CD8-positive, alpha-beta T cell (primary cell): ENCODE measurements at regions of chr1 and their contacts with region 1.

Region 1: DNA sequence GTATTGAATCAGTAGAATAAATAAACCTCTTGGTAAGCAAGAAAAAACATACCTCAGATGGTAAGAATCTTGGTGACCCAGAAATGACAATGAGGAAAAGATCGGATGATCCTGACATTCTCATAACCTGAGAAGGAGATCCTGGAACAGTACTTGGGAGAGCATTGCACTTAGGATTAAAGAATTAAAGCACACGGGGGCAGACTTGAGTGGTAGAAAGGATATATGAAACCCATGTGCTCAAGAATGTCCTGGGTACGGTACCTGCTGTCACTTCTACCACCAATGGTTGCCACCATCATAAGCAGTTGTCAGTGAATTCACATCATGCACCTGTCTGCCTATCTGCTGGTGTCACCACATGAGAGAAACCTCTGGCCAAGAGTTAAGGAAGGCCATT is 108.9 kb upstream of the GJB5 start:
- DNase-seq: no peak
- ATAC-seq: no peak
- H3K4me3 ChIP-seq: no peak overlapping the region
- H3K4me3 Mint-ChIP-seq: no peak overlapping the region
- H3K27ac ChIP-seq: no peak overlapping the region
- H3K27ac Mint-ChIP-seq: no peak overlapping the region
- H3K4me1 ChIP-seq: no peaks in the 10 kb centered on the region
- H3K4me1 Mint-ChIP-seq: no peaks in the 10 kb centered on the region
- H3K27me3 ChIP-seq: peaks cover 0 to 4% of the 10 kb centered on the region in 2 experiments
- H3K27me3 Mint-ChIP-seq: peaks cover 25% of the 10 kb centered on the region
- CTCF ChIP-seq: no peak

Region 2: GRCh38 chr1:34631126-34631525 is 14.8 kb before region 1 on chr1:
- CTCF ChIA-PET with region 1: interaction called, 5 read pairs
- POLR2A ChIA-PET with region 1: no interaction called
- intact Hi-C with region 1: loop called (anchors 1 kb)
- DNase-seq: no peak
- ATAC-seq: no peak
- H3K4me3 ChIP-seq: no peak overlapping the region
- H3K4me3 Mint-ChIP-seq: no peak overlapping the region
- H3K27ac ChIP-seq: no peak overlapping the region
- H3K27ac Mint-ChIP-seq: no peak overlapping the region
- H3K4me1 ChIP-seq: no peaks in the 10 kb centered on the region
- H3K4me1 Mint-ChIP-seq: no peaks in the 10 kb centered on the region
- H3K27me3 ChIP-seq: no peaks in the 10 kb centered on the region
- H3K27me3 Mint-ChIP-seq: peaks cover 5% of the 10 kb centered on the region
- CTCF ChIP-seq: no peak